ENCODE measurements at regions of chr13 and their contacts with region 1.

Region 1: DNA sequence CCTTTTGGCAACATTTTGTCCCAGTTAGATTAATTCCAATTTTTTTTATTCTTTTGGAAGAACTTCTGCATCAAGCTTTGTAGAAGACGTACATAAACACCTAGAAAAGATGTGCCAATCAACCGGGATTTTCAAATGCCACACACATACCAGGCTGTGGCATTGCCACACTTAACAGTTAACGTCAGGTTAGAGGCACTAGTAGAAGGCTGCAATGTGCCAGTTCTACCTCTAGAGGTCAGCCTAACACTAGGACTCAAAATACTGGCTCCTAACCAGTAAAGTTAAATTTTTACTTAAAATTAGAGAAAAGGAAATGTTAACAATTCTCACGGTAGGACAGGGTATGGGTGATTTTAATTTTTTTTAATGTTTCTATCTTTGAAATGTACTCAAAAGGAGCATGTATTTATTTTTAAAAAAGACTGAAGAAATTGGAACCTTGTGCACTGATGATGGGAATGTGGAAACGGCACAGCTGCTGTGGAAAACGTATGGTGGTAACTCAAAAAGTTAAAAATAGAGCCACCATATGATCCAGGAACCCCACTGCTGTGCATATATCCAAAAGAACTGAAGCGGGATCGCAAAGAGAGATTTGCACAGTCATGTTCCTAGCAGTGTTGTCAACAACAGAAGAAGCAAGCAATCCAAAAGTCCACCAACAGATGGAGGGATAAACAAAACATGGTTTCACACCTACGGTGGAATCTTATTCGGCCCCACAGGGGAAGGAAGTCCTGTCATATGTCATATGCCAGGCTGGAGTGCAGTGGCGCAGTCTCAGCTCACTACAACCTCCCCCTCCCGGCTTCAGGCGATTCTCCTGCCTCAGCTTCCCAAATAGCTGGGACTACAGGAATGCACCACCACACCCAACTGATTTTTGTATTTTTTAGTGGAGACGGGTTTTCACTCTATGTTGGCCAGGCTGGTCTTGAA is 30.3 kb downstream of the CRYL1 start:
- DNase-seq: peak; percentile 69
- H3K4me3 ChIP-seq: peak overlapping the region; percentile 63
- H3K27ac ChIP-seq: peak overlapping the region; percentile 35
- H3K4me1 ChIP-seq: peaks cover 4% of the 10 kb centered on the region
- H3K27me3 ChIP-seq: no peaks in the 10 kb centered on the region

Region 2: GRCh38 chr13:19178901-19179593 is 1316.3 kb before region 1 on chr13:
- in situ Hi-C with region 1: no loop called
- DNase-seq: no peak
- H3K4me3 ChIP-seq: no peak overlapping the region
- H3K27ac ChIP-seq: no peak overlapping the region
- H3K4me1 ChIP-seq: no peaks in the 10 kb centered on the region
- H3K27me3 ChIP-seq: no peaks in the 10 kb centered on the region

Region 3: DNA sequence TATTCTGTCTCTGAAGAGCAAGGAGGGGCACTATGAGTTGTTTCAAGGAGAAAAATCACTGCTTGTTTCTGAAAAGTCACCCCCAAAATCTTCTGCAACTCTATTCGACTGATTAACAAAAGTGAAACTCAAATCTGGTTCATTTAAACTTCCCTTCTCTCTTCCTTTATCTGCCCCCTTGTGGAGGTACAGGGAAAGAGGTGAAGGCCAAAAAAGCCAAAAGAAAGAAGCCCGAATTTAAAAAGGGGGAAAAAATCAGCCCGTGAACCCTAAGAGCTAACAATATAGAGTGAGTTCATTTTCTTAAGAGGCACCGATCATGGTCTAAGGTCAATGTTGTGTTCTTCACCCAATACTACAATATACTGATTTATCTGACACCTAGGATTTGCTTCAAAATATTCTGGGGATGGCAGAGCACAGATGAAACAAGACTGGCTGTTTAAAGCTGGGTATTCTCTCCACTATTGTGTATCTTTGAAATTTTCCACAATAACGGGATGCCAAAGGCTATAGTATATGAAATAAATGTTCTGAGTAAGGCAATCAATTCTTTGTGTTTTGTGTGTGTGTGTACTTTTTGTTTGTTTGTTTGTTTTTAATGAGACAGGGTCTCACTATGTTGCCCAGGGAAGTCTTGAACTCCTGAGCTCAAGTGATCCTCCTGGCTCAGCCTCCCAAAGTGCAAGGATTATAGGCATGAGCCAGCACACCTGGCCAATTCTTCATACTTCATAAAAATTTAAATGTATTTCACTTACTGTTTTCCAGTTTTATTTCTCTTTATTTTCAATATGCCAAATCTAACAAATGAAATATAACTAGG is 333.4 kb after region 1 on chr13:
- in situ Hi-C with region 1: loop called (anchors 10 kb)
- DNase-seq: peak; percentile 81
- H3K4me3 ChIP-seq: peak overlapping the region; percentile 68
- H3K27ac ChIP-seq: no peak overlapping the region
- H3K4me1 ChIP-seq: peaks cover 40% of the 10 kb centered on the region
- H3K27me3 ChIP-seq: no peaks in the 10 kb centered on the region

Region 4: DNA sequence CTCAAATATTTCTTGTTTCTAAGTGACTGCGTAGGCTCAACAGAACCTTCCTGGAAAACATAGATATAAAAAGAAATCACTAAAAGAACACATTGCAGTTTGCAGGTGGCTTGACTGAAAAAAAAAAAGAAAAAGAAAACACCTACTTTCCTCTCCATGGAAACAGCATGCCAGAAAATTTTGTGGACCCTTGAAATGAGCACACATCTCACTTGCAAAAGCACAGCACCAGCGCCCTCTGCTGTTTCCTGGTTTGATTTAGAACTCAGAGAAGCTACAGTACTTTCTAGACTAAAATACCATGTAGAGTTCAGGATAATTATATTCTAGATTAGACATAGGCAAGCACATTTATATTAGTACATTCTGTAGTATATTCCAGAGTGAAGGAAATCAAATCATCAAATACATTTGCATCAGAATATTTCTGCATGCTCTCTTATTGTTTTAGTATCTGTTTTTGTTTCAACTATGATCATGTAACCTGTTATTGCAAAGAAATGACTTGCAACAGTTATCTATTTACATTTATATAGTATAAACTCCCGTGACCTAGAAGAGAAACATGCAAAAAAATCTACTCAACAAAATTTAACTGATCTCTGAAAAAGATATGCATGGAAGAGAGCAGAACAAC is 429.5 kb after region 1 on chr13:
- in situ Hi-C with region 1: loop called (anchors 10 kb)
- DNase-seq: peak; percentile 82
- H3K4me3 ChIP-seq: no peak overlapping the region
- H3K27ac ChIP-seq: no peak overlapping the region
- H3K4me1 ChIP-seq: no peaks in the 10 kb centered on the region
- H3K27me3 ChIP-seq: no peaks in the 10 kb centered on the region